Mucosa of descending colon (tissue), 3 donors: ENCODE measurements at regions of chr6 and their contacts with region 1.

Region 1: DNA sequence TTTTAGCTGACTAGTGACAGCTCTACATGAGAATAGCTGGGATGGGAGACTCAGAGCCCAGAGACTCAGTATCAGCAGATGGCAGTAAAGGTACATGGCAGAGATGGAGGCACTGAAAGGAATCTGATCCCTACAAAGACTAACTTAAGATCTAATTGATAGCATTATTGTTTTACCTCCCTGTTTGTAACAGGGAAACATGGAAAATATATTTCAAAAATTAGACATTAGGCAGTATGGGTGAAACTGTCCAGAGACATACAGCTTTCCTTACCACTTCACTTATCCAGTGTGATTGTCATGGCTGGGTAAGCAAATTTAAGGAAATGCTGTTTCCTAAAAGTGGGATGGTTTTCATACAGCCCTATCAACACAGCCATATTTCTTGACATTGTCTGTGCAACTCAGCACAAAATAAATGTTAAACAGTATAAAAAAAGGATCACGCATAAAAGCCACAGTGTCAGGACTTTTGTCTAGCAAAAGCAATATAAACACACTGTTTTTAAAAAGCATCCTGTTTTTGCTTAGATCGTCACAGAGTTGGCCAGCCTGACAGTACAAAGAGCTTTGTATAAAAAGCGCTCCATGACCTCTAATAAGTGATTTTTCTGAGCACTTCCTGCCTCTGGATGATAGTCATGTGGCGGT is 376.9 kb downstream of the PHF3 start:
- DNase-seq: peak in 1 of 3 donors; percentile 68
- ATAC-seq: peak; percentile 86
- H3K4me3 ChIP-seq: no peak overlapping the region
- H3K4me1 ChIP-seq: no peaks in the 10 kb centered on the region
- CTCF ChIP-seq: peak; percentile 20

Region 2: DNA sequence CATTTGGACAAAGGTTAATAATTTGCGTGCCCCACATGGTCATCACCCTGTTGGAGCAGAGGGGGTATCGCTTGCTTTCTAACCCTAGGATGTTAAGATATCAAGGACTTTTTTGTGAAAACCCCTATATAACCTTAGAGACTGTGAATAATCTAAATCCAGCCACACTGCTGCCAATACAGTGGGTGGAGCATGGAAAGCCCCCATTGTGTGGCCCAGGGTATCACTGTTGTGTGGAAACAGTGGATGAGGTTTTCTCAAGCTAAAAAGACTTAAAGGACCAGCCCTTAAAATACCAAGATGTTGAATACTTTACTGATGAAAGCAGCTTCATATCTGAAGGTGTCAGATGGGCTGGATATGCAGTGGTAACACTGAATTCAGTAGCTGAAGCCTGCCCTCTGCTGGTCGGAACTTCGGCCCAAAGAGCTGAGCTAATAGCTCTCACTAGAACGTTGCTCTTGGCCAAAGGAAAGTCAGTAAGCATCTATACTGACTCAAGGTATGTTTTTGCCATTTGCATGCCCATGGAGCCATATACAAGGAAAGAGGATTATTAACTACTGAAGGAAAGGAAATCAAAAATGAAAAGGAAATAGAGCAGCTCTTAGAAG is 318.3 kb after region 1 on chr6:
- intact Hi-C with region 1: loop called (anchors 5 to 10 kb)
- DNase-seq: peak; percentile 51 to 96 (median 87)
- ATAC-seq: peak; percentile 54
- H3K4me3 ChIP-seq: no peak overlapping the region
- H3K4me1 ChIP-seq: no peaks in the 10 kb centered on the region
- CTCF ChIP-seq: peak; percentile 26